Naive thymus-derived CD4-positive, alpha-beta T cell (primary cell): ENCODE measurements at regions of chr12 and their contacts with region 1.

Region 1: DNA sequence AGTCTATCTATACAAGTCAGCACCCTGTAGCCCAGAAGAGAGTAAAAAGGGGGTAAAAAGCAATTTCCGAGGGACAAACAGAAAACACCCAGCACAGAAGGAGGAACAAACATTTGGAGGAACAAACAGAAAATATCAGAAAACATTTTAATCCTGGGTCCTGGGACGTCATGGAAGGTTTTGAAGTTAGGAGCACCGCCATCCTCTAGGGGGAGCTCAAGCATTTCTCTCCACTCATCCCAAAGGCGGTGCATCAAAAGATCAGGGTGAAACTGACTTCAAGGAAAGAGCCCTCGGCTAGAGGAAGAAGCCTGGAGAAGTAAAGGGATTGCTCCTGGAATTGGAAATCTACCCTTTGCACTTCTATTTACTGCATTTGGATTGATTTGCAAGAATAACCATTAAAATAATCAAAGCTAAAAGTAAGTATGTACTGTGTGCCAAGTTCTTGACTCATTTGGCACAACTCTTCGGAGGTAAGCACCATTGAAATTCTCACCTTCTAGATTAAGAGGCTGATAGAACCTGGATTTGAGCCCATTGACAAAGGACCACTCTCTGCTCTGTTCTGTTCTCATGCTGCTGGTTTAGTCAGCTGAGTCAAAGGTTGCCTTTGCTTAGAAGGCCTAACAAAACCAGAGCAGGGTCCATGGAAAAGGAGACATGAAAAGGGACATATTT is 17.2 kb upstream of the POC1B start:
- DNase-seq: peak; percentile 20 to 75 (median 64)
- ATAC-seq: peak; percentile 91
- H3K4me3 ChIP-seq: no peak overlapping the region
- H3K4me3 Mint-ChIP-seq: peak overlapping the region in 1 of 10 donors; percentile 36
- H3K27ac ChIP-seq: no peak overlapping the region
- H3K27ac Mint-ChIP-seq: peak overlapping the region in 1 of 9 donors; percentile 3
- H3K4me1 ChIP-seq: no peaks in the 10 kb centered on the region
- H3K4me1 Mint-ChIP-seq: peaks cover 5 to 10% (median 6%) of the 10 kb centered on the region in 7 donors
- H3K27me3 ChIP-seq: no peaks in the 10 kb centered on the region
- H3K27me3 Mint-ChIP-seq: peaks cover 0 to 4% (median 0%) of the 10 kb centered on the region in 5 donors

Region 2: GRCh38 chr12:89427508-89428156 is 115.4 kb before region 1 on chr12:
- CTCF ChIA-PET with region 1: no interaction called
- POLR2A ChIA-PET with region 1: no interaction called
- intact Hi-C with region 1: no loop called
- DNase-seq: peak in 1 of 9 donors; percentile 22
- ATAC-seq: peak; percentile 83
- H3K4me3 ChIP-seq: no peak overlapping the region
- H3K4me3 Mint-ChIP-seq: peak overlapping the region in 8 of 10 donors; percentile 0 to 83 (median 17)
- H3K27ac ChIP-seq: no peak overlapping the region
- H3K27ac Mint-ChIP-seq: peak overlapping the region in 5 of 9 donors; percentile 2 to 95 (median 52)
- H3K4me1 ChIP-seq: peaks cover 5 to 29% of the 10 kb centered on the region in 2 donors
- H3K4me1 Mint-ChIP-seq: peaks cover 12 to 48% (median 24%) of the 10 kb centered on the region in 7 donors
- H3K27me3 ChIP-seq: no peaks in the 10 kb centered on the region
- H3K27me3 Mint-ChIP-seq: no peaks in the 10 kb centered on the region

Region 3: DNA sequence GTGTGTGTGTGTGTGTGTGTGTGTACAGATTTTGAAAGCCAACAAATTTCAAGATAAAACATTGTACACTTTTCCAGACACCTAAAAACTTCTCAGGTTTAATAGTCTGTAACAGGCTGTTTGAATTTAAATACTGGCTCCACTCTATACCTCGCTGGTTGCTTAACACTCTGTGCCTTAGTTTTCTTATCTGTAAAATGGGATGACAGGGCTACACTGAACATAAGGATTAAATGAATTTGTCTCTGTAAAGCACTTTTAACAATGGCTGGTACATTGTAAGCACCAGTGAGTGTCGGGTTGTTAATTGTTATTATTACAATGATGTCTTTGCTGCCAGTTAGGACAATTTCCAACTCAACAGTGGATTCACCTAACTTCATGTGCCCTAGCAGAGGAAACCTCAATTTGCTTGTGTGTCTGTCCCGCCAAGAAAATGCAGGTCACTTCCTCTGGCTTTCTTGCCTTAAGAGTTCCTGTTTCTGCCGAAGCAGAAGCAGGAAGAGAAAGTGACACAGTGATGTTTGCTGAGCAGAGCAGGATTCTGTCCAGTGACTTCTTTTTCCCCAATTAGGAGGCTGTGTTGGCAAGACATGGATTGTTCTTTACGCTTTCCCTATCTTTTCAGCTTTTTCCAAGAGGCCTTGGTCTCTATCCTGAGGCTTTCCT is 319.6 kb after region 1 on chr12:
- CTCF ChIA-PET with region 1: interaction called, 8 read pairs
- POLR2A ChIA-PET with region 1: no interaction called
- intact Hi-C with region 1: loop called (anchors 1 to 10 kb)
- DNase-seq: peak in 7 of 9 donors; percentile 46 to 66 (median 57)
- ATAC-seq: peak; percentile 49
- H3K4me3 ChIP-seq: peak overlapping the region; percentile 44
- H3K4me3 Mint-ChIP-seq: peak overlapping the region; percentile 78 to 86 (median 82)
- H3K27ac ChIP-seq: peak overlapping the region; percentile 87
- H3K27ac Mint-ChIP-seq: peak overlapping the region; percentile 96 to 99 (median 98)
- H3K4me1 ChIP-seq: peaks cover 23 to 30% of the 10 kb centered on the region in 2 donors
- H3K4me1 Mint-ChIP-seq: peaks cover 40 to 72% (median 53%) of the 10 kb centered on the region in 7 donors
- H3K27me3 ChIP-seq: no peaks in the 10 kb centered on the region
- H3K27me3 Mint-ChIP-seq: no peaks in the 10 kb centered on the region

Region 4: GRCh38 chr12:90013409-90013808 is 470.4 kb after region 1 on chr12:
- CTCF ChIA-PET with region 1: interaction called, 4 read pairs
- POLR2A ChIA-PET with region 1: no interaction called
- intact Hi-C with region 1: loop called in 1 of 2 experiments (anchors 1 kb)
- DNase-seq: peak in 2 of 9 donors; percentile 8 to 16
- ATAC-seq: peak; percentile 60
- H3K4me3 ChIP-seq: no peak overlapping the region
- H3K4me3 Mint-ChIP-seq: no peak overlapping the region
- H3K27ac ChIP-seq: no peak overlapping the region
- H3K27ac Mint-ChIP-seq: no peak overlapping the region
- H3K4me1 ChIP-seq: no peaks in the 10 kb centered on the region
- H3K4me1 Mint-ChIP-seq: peaks cover 0 to 2% (median 0%) of the 10 kb centered on the region in 7 donors
- H3K27me3 ChIP-seq: no peaks in the 10 kb centered on the region
- H3K27me3 Mint-ChIP-seq: peaks cover 0 to 3% (median 0%) of the 10 kb centered on the region in 5 donors

Region 5: GRCh38 chr12:90253674-90254181 is 710.7 kb after region 1 on chr12:
- CTCF ChIA-PET with region 1: no interaction called
- POLR2A ChIA-PET with region 1: no interaction called
- intact Hi-C with region 1: loop called in 1 of 2 experiments (anchors 5 kb)
- DNase-seq: peak in 3 of 9 donors; percentile 1 to 21 (median 7)
- ATAC-seq: peak; percentile 94
- H3K4me3 ChIP-seq: no peak overlapping the region
- H3K4me3 Mint-ChIP-seq: peak overlapping the region in 1 of 10 donors; percentile 14
- H3K27ac ChIP-seq: no peak overlapping the region
- H3K27ac Mint-ChIP-seq: no peak overlapping the region
- H3K4me1 ChIP-seq: peaks cover 0 to 9% of the 10 kb centered on the region in 2 donors
- H3K4me1 Mint-ChIP-seq: peaks cover 0 to 10% (median 6%) of the 10 kb centered on the region in 7 donors
- H3K27me3 ChIP-seq: no peaks in the 10 kb centered on the region
- H3K27me3 Mint-ChIP-seq: peaks cover 0 to 22% (median 4%) of the 10 kb centered on the region in 5 donors

Region 6: GRCh38 chr12:90909069-90909770 is 1366.2 kb after region 1 on chr12:
- CTCF ChIA-PET with region 1: no interaction called
- POLR2A ChIA-PET with region 1: no interaction called
- intact Hi-C with region 1: loop called in 1 of 2 experiments (anchors 1 kb)
- DNase-seq: no peak
- ATAC-seq: no peak
- H3K4me3 ChIP-seq: no peak overlapping the region
- H3K4me3 Mint-ChIP-seq: no peak overlapping the region
- H3K27ac ChIP-seq: no peak overlapping the region
- H3K27ac Mint-ChIP-seq: no peak overlapping the region
- H3K4me1 ChIP-seq: no peaks in the 10 kb centered on the region
- H3K4me1 Mint-ChIP-seq: no peaks in the 10 kb centered on the region
- H3K27me3 ChIP-seq: no peaks in the 10 kb centered on the region
- H3K27me3 Mint-ChIP-seq: peaks cover 0 to 20% (median 4%) of the 10 kb centered on the region in 5 donors

Region 7: DNA sequence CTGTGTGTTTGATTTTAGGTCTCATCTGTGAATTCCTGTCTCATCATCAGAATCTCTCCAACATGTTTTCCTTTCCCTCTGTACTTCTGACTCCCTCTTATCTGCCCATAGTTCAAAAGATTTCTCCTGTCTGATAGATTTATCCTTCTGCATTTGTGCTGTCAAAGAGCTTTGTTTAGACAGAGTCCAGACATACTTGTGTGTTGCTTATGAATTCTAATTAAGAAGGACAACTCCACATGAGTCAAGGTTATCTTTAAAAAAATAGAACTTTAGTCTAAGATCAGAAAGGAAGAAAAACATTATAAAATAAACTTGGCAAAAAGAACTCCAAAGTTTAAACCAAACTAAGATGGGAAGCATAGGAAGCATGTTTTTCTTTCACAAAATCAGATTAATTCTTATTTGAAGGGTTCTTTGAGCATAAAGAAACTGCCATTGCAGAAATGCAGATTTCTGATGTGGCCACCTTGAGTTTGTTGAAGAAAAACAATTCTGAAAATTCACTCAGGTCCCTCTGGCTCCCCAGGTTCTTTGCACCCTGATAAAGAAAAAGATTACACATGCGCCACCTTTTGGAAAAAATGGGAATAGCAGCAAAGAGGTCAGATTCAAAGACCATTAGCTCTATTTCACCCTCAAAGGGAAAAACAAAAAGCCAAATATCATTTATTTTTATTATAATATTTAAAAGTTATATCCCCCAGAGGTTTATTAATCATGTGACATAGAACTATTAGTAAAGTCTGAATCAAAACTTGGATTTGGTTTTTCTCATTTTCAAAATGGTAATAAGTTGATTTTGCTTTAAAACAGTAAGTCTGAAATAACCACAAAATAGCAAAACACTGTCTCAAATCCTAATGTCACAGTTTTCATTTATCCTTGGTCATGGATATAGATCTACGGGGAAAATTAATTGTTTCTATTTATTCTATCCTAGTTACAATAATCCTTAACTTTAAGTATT is 1783.3 kb after region 1 on chr12:
- CTCF ChIA-PET with region 1: no interaction called
- POLR2A ChIA-PET with region 1: no interaction called
- intact Hi-C with region 1: loop called in 1 of 2 experiments (anchors 10 kb)
- DNase-seq: peak in 7 of 9 donors; percentile 1 to 50 (median 27)
- ATAC-seq: peak; percentile 40
- H3K4me3 ChIP-seq: no peak overlapping the region
- H3K4me3 Mint-ChIP-seq: no peak overlapping the region
- H3K27ac ChIP-seq: no peak overlapping the region
- H3K27ac Mint-ChIP-seq: no peak overlapping the region
- H3K4me1 ChIP-seq: no peaks in the 10 kb centered on the region
- H3K4me1 Mint-ChIP-seq: no peaks in the 10 kb centered on the region
- H3K27me3 ChIP-seq: no peaks in the 10 kb centered on the region
- H3K27me3 Mint-ChIP-seq: peaks cover 0 to 8% (median 5%) of the 10 kb centered on the region in 5 donors